Activated B cell treated with CpG ODN at 0.5 μM for 24 hours (primary cell): ENCODE measurements at regions of chr6 and their contacts with region 1.

Region 1: GRCh38 chr6:15245361-15246216 is at the start of gene JARID2:
- DNase-seq: peak; percentile 94
- ATAC-seq: peak; percentile 61
- H3K4me3 Mint-ChIP-seq: peak within 1 kb of the TSS; percentile 100
- H3K27ac Mint-ChIP-seq: peak within 1 kb of the TSS; percentile 96
- H3K4me1 Mint-ChIP-seq: peaks cover 32% of the 10 kb centered on the region
- H3K27me3 Mint-ChIP-seq: no peaks in the 10 kb centered on the region
- CTCF ChIP-seq: no peak
- total RNA-seq, gene JARID2: 27.0 and 28.5 TPM in 2 replicates

Region 2: GRCh38 chr6:13908955-13909381 is 1336.6 kb before region 1 on chr6:
- CTCF ChIA-PET with region 1: interaction called, 4 read pairs
- POLR2A ChIA-PET with region 1: no interaction called
- intact Hi-C with region 1: loop called (anchors 10 kb)
- DNase-seq: no peak
- ATAC-seq: peak; percentile 80
- H3K4me3 Mint-ChIP-seq: no peak overlapping the region
- H3K27ac Mint-ChIP-seq: no peak overlapping the region
- H3K4me1 Mint-ChIP-seq: peaks cover 5% of the 10 kb centered on the region
- H3K27me3 Mint-ChIP-seq: peaks cover 4% of the 10 kb centered on the region
- CTCF ChIP-seq: peak; percentile 91

Region 3: DNA sequence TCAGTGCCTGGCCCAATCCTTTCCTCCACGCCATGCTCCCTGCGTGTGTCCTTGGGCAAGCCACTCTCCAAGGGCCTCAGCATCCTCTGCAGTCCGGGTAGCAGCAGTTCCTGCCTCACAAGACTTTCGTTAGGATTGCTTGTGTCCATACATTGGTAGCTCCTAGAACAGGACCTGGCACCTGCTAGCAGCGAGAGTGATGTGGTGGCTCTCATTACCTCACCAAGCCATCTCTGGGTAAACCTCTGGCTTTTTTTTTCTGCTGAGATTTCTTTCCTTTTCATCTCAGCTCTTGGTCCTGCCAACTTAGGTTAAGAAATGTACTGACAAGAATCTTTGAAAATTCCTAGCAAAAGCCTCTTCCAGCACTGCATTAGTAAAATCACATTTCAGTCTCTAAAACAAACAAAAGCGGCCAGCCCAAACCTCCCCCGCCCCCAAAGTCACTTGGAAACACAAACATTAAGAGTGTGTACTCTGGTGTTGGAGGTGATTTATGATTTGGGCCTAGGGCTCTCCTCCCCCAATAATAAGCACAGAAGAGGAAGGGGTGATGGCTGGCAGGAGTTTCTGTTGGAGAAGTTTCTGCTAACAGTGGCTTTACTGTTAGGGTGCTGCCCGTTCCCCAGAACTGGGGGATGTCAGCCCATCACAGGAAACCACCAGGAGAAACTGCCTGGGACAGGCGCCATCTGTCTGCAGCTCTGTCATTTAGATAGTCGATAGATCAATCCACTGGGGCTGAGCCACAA is 928.8 kb before region 1 on chr6:
- CTCF ChIA-PET with region 1: no interaction called
- POLR2A ChIA-PET with region 1: no interaction called
- intact Hi-C with region 1: loop called (anchors 10 kb)
- DNase-seq: no peak
- ATAC-seq: no peak
- H3K4me3 Mint-ChIP-seq: peak overlapping the region; percentile 32
- H3K27ac Mint-ChIP-seq: peak overlapping the region; percentile 71
- H3K4me1 Mint-ChIP-seq: peaks cover 65% of the 10 kb centered on the region
- H3K27me3 Mint-ChIP-seq: no peaks in the 10 kb centered on the region
- CTCF ChIP-seq: no peak

Region 4: DNA sequence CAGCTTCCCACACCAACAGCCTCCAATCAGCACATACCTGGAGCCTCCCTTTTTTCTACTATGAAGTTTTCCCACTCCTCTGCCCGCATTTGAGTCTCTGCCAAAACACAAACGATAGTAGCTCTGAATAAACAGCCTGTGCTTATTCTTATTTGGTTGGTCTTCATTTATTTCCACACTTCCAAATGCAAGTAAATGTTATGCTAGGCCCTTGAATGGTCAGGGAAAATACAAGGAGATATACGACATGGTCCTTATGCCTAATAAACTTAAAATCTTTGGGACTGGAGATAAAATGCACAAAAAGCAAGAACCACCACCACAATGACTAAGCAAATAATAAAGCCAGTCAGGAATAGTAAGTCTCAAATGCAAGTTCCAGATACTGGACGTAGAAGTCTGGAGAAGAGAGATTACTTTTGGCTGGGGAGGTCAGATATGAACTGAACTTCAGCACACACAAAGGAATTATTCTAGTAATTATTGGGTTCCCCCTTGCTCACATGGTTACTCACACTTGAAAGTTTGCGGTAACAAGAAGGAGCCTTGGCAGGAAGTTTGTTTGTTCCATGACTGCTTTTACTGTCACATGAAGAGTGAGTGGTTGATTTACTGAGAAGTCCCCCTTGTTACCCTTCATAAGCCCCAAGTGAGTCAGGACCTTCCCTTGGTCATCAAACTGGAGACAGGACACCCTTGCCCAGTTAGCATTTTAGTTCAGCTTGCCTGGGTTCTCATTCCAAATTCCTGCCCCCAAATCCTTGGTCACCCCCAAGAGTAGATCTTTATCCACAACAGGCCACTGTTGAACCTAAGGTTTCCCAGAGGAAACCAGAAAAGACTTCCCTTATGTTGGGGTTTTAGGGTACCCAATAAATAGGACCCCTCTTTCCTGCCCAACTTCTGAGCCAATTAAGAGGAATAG is 510.9 kb before region 1 on chr6:
- CTCF ChIA-PET with region 1: no interaction called
- POLR2A ChIA-PET with region 1: interaction called, 4 read pairs
- intact Hi-C with region 1: loop called (anchors 2 kb)
- DNase-seq: no peak
- ATAC-seq: peak; percentile 81
- H3K4me3 Mint-ChIP-seq: peak overlapping the region; percentile 71
- H3K27ac Mint-ChIP-seq: peak overlapping the region; percentile 76
- H3K4me1 Mint-ChIP-seq: peaks cover 99% of the 10 kb centered on the region
- H3K27me3 Mint-ChIP-seq: no peaks in the 10 kb centered on the region
- CTCF ChIP-seq: no peak

Region 5: DNA sequence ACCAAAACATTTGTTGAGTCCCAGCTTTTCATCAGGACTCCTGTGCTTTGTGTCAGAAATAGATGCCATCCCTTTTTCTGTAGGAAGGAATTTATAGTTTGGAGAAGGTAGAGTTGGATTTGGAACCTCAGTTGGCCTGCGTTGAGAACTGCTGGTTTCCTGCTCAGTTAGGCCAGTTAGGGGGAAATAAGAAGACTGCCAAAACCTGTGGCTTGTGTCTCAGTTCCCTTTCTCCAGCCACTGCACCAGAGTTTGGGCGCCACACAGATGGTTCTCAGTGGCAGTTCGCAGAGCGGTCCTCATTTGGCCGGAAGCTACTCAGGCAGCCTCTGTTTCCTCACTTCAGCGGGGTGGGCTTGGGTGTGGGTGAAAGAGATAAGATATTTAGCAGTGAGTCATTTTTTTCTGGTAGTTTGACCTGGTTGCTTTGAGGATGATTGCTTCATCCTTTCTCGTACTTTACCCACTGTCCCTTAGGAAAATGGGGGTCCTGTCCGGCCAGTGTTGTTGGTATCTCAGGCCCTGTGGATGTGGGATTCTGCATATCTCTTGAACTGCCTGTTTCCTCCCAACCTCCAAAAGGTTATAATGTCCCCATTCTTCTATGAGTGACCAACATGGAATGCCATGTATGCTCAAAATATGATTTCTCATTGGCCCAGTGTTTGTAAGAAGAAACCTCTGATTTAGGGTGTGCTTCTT is 54.0 kb after region 1 on chr6:
- CTCF ChIA-PET with region 1: no interaction called
- POLR2A ChIA-PET with region 1: interaction called, 7 read pairs
- intact Hi-C with region 1: loop called (anchors 1 kb)
- DNase-seq: peak; percentile 59
- ATAC-seq: peak; percentile 97
- H3K4me3 Mint-ChIP-seq: peak overlapping the region; percentile 67
- H3K27ac Mint-ChIP-seq: peak overlapping the region; percentile 89
- H3K4me1 Mint-ChIP-seq: peaks cover 81% of the 10 kb centered on the region
- H3K27me3 Mint-ChIP-seq: no peaks in the 10 kb centered on the region
- CTCF ChIP-seq: no peak

Region 6: DNA sequence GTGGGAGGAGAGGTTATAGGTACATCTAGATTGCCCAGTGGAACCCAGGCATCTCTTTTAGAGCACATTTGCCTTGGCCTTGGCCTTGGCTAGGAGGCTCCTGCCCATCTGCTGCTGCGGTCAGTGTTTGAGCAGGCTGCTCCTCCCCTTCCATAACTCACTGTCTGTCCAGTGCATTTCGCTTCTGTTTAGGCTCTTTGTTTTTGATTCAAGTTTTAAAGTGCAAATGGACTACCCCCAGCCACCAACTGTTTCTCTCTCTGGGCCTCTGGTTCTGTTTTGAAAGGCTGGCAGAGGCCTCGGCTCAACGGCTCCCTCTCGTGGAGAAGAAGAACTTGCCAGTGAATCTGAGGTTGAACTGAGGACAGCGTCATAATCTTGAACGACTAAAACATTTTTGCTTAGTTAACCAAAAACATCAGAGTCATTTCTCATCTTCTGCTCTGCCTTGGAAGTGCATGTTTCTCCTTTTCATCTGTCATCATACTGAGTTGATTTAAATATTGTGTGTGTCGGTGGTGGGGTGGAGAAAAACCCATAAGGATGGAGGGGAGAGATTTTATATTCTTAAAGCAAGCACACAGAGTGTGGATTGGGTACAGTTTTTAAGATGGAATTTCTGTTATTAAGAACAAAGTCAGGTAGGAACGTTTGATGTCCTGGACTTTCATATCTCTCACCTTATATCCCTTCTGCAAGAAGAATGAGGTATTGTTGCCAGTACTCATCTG is 245.8 kb after region 1 on chr6:
- CTCF ChIA-PET with region 1: no interaction called
- POLR2A ChIA-PET with region 1: no interaction called
- intact Hi-C with region 1: loop called (anchors 5 kb)
- DNase-seq: peak; percentile 35
- ATAC-seq: peak; percentile 82
- H3K4me3 Mint-ChIP-seq: no peak overlapping the region
- H3K27ac Mint-ChIP-seq: no peak overlapping the region
- H3K4me1 Mint-ChIP-seq: peaks cover 32% of the 10 kb centered on the region
- H3K27me3 Mint-ChIP-seq: no peaks in the 10 kb centered on the region
- CTCF ChIP-seq: peak; percentile 95